Heart left ventricle (tissue), 16 donors: ENCODE measurements at regions of chr15 and their contacts with region 1.

Region 1: DNA sequence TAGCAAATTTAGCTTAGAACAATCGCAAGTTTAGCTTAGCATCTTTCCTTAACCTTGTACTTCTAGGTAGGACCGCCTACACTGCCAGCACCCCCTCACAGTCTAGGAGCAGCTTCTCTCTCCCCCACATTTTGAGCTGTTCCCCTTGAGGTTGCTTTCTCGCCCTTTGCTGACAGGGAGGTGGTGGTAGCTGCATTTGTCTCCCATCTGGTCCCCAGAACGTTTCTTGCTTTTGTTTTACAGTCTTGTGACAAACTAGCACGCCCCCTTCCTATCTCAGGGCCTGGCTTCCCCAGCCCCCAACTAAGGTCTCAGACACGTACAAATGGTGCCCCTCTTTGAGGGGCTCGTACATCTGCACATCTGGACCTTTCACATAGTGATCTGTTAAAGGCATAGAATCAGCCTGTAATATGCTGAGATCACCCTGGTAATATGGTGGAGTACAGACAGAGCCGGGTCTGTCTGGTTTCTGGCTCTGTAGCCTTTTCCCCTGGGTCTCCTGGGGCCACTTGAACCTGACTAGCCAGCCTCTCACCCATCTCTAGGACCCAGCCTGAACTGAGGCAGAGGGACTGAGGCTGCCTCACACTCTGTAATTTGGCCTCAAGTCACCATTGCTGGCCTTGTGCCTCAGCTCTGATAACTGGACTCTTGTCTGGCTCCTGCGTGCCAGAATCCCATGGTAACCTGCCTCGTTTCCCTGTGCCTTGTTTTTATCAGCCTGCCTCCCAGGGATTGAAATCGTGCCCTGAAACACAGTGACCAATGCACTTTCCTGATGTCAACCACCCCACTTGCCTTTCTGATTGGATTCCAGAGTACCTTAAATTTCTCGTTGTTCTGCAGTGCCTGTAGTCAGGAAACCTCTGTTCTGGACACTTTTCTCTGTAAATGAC is 27.7 kb downstream of the CRTC3 start:
- DNase-seq: peak; percentile 83 to 96 (median 89)
- ATAC-seq: peak; percentile 82 to 89 (median 86)
- H3K4me3 ChIP-seq: peak overlapping the region in 3 of 12 donors; percentile 11 to 17 (median 14)
- H3K27ac ChIP-seq: peak overlapping the region; percentile 75 to 91 (median 84)
- H3K4me1 ChIP-seq: peaks cover 8 to 93% (median 81%) of the 10 kb centered on the region in 12 donors
- H3K27me3 ChIP-seq: no peaks in the 10 kb centered on the region
- CTCF ChIP-seq: peak in 1 of 12 donors; percentile 5
- POLR2A ChIP-seq: peak in 1 of 2 donors; percentile 15

Region 2: DNA sequence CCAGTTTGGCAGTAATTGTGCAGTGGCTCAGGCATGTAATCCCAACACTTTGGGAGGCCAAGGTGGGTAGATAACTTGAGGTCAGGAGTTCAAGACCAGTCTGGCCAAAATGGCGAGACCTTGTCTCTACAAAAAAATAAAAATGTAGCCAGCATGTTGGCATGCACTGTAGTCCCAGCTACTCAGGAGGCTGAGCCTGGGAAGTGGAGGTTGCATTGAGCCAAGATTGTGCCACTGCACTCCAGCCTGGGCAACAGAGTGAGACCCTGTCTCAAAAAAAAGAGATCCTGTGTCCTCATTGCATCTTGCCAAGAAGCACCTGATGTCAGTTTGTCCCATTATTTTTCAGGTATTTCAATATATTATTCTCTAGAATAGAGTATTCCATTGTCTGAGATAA is 34.1 kb after region 1 on chr15:
- intact Hi-C with region 1: loop called in 3 of 10 experiments (anchors 2 to 5 kb)
- DNase-seq: no peak
- ATAC-seq: no peak
- H3K4me3 ChIP-seq: no peak overlapping the region
- H3K27ac ChIP-seq: peak overlapping the region in 1 of 12 donors; percentile 14
- H3K4me1 ChIP-seq: peaks cover 0 to 72% (median 25%) of the 10 kb centered on the region in 12 donors
- H3K27me3 ChIP-seq: no peaks in the 10 kb centered on the region
- CTCF ChIP-seq: no peak
- POLR2A ChIP-seq: no peak

Region 3: DNA sequence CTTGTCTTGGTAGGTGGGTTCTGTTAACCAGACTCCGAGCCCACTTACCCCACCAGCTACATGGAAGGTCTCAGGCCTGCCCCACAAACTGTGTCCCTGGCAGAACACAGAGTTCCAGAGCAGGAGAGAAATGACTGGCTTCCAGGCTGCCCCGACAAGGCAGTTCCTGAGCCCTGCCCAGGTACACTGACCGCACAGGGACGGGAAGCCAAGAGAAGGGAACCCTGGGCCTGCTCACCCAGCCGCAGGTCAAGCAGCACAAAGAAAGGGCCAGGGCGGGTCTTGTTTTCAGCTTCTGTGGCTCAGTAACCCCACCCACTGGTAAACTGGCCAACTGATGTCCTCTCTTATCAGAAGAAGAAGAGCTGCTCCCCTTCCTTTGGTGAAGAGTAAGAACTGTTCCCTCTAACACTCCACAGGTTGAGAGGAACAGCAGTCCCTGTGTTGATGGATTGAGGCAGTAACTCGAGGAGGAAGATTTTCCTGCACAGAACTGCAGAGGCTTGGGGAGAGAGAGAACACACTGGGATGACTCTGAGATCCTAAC is 40.7 kb after region 1 on chr15:
- intact Hi-C with region 1: loop called in 2 of 10 experiments (anchors 5 kb)
- DNase-seq: peak in 4 of 5 donors; percentile 56 to 72 (median 64)
- ATAC-seq: peak; percentile 72 to 78 (median 76)
- H3K4me3 ChIP-seq: no peak overlapping the region
- H3K27ac ChIP-seq: peak overlapping the region; percentile 25 to 87 (median 66)
- H3K4me1 ChIP-seq: peaks cover 8 to 59% (median 35%) of the 10 kb centered on the region in 12 donors
- H3K27me3 ChIP-seq: no peaks in the 10 kb centered on the region
- CTCF ChIP-seq: peak in 7 of 12 donors; percentile 12 to 47 (median 22)
- POLR2A ChIP-seq: no peak

Region 4: GRCh38 chr15:91182101-91182500 is 624.7 kb after region 1 on chr15:
- intact Hi-C with region 1: no loop called
- DNase-seq: no peak
- ATAC-seq: no peak
- H3K4me3 ChIP-seq: no peak overlapping the region
- H3K27ac ChIP-seq: no peak overlapping the region
- H3K4me1 ChIP-seq: no peaks in the 10 kb centered on the region
- H3K27me3 ChIP-seq: peaks cover 0 to 9% (median 0%) of the 10 kb centered on the region in 9 donors
- CTCF ChIP-seq: no peak
- POLR2A ChIP-seq: no peak